GM18951 (cell line): ENCODE measurements at regions of chr16 and their contacts with region 1.

Region 1: GRCh38 chr16:55701442-55702319 is 45.9 kb downstream of the SLC6A2 start:
- POLR2A ChIP-seq: no peak

Region 2: GRCh38 chr16:55465077-55465896 is 236.4 kb before region 1 on chr16:
- in situ Hi-C with region 1: loop called (anchors 5 kb)
- POLR2A ChIP-seq: no peak

Region 3: DNA sequence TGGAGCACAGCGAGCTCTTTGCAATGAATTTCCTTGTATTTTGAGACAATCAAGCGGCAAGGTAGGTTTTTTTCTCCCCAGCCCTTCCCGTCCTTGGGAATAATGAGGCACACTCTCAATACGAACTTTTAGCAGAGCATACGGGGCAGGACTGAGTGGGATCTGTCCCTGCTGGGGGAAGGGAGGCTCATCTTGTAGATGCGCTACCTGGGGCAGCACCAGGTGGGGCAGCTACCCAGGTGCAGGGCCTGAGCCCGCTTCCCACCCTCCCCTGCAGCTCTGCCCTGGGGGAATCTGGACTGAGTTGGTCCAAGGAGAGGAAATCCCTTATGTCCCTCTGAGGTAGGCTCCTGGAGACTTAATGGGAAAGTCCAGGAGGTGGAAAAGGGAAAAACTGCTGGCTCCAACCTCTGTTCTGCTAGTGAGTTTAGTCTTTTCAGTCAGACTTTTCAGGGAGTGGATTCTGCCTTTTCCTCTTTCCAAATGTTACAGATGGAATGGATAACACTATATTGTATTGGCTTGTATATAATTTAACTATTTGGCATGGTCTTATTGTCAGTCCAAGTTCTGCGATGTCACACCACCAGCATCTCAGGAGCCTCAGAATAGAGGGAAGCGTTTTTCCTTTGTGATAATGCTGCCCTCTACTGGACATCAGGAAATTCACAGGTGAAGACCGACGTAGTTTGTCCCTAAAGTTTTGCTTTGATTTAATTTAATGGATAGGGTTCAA is 140.9 kb after region 1 on chr16:
- in situ Hi-C with region 1: loop called (anchors 10 kb)
- POLR2A ChIP-seq: no peak